ENCODE measurements at regions of chr12 and their contacts with region 1.

Region 1: DNA sequence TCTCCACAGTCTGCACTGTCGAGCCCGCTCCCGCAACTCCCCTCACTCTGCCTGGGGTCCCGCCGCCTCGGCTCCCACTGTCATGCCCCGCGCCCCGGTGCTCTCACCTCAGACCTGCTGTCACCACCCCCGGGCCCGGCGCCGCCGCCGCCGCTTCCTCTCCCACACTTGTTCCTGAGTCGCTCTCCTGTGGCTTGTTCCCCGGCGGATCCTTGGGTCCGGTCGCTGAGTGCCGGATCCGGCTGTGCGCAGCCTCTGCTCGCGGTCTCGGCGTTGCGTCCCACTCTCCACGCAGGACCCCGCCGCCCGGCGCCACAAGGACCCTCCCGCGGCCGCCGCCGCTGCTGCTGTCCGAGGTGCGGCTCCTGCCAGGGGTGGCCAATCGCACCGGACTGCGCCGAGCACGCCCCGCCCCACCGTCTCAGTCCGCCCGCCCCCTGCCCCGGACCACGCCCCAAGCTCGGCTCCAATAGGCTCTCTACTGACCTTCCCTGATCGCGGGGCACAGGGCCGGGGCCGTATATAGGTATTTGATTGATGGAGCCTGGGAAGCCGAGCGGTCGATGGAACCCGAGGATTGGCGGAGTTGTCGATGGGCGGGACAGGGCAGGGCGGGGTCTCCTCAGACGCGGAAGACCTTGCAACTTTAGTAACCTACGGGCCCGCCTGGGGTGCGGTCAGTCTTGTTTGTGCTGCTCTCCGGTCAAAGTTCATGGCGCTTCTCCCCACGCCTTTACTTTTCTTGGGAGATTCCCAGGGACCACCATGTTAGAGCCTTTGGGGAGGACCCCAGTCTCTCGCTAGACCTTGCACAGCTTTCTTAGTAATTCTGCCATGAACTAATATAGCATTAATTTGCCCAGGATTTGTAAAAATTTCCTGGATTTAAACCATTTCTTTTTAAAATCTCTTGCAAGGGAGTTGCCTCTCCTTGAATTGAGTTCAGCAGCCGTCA is at the start of gene TAOK3:
- DNase-seq: peak; percentile 94 to 99 (median 96)
- ATAC-seq: peak; percentile 84
- H3K4me3 ChIP-seq: peak within 1 kb of the TSS; percentile 86
- H3K4me3 Mint-ChIP-seq: peak within 1 kb of the TSS; percentile 100
- H3K27ac ChIP-seq: peak within 1 kb of the TSS; percentile 46 to 71
- H3K27ac Mint-ChIP-seq: peak within 1 kb of the TSS; percentile 100
- H3K4me1 ChIP-seq: peaks cover 49% of the 10 kb centered on the region
- H3K4me1 Mint-ChIP-seq: peaks cover 61% of the 10 kb centered on the region
- H3K27me3 ChIP-seq: no peaks in the 10 kb centered on the region
- H3K27me3 Mint-ChIP-seq: no peaks in the 10 kb centered on the region
- CTCF ChIP-seq: no peak
- total RNA-seq, gene TAOK3: 53.5 to 56.6 TPM

Region 2: DNA sequence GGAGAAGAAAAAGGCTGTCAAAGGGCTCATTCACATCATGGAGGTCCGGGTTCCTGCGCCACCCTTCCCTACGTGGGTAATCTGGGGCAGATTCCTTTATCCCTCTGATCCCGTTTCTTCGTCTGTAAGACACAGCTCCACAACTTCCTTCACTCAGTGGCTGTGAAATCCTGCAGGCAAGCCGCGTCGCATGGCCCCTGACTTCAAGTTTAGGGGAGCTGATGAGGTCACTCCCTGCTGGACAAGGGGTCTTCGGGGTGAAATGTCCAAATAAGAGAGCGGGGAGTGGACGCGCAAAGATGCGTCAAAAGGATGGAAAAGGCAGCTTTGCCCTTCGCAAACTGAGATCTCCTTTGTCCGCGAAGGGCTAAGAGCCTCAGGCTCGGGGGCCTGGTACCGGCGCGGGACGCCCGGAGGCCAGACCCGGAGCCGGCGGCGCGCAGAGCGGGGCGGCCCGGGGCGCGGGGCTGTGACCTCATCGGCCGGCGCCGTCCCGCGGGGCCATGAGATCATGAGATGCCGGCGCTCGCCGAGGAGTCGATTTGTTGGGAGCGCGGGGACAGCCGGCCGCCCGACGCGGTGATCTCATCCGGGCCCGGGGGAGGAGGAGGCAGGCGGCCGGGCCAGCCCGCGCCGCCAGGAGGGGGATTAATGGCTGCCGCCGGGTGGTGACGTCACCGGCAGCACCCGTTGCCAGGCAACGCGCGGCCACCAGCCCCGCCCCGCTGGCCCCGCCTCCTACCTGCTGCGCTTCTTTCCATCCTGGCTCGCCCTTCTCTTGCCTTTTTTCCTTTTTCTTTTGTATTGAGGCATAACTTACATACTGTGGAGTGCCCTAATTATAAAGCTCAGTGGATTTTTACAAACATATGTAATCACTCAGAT is 1553.6 kb before region 1 on chr12:
- CTCF ChIA-PET with region 1: no interaction called
- POLR2A ChIA-PET with region 1: no interaction called
- intact Hi-C with region 1: loop called in 1 of 2 experiments (anchors 10 kb)
- DNase-seq: peak; percentile 83 to 97 (median 88)
- ATAC-seq: peak; percentile 86
- H3K4me3 ChIP-seq: peak overlapping the region; percentile 71
- H3K4me3 Mint-ChIP-seq: peak overlapping the region; percentile 98
- H3K27ac ChIP-seq: peak overlapping the region; percentile 80 to 81
- H3K27ac Mint-ChIP-seq: peak overlapping the region; percentile 89
- H3K4me1 ChIP-seq: peaks cover 16% of the 10 kb centered on the region
- H3K4me1 Mint-ChIP-seq: peaks cover 21% of the 10 kb centered on the region
- H3K27me3 ChIP-seq: no peaks in the 10 kb centered on the region
- H3K27me3 Mint-ChIP-seq: no peaks in the 10 kb centered on the region
- CTCF ChIP-seq: no peak

Region 3: DNA sequence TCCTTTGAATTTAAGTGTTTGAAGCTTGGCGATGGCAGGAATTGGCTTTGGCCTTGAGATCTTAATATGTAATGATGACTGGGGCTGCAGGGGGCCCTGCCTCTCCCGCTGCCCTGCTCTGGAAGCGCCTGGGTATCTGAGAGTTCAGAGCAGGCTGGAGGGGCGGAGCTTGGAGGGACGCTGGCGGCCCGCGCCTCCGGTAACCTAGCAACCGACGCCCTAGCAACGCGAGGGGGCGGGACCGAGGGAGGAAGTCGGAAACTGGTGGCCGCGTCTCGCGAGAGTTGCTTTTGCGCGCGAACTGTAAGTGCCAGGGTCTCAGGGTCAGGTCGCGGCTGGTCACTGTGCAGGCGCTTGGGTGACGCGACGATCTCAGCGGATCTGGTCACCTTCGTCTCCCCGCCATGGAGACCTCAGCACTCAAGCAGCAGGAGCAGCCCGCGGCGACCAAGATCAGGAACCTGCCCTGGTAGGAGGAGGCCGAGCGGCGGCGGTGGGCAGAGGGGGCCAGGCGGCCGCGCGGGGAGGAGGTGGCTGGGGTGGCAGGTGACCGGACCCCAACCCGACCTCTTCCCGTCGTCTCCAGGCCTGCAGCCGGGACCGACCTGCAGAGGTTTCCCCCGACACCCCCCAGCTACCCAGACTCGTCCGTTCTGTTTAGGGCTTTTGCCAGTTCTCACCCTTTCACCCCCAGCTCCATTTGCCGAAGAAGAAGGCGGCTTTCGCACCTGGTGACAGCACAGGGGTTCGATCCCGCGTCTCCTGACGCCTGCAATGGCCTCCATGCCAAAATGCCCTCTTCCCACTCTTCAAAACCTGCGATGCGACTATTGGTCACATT is 356.2 kb before region 1 on chr12 and contains the start of gene RFC5:
- CTCF ChIA-PET with region 1: no interaction called
- POLR2A ChIA-PET with region 1: interaction called, 3 read pairs
- intact Hi-C with region 1: loop called in 1 of 2 experiments (anchors 2 kb)
- DNase-seq: peak; percentile 94 to 99 (median 97)
- ATAC-seq: peak; percentile 98
- H3K4me3 ChIP-seq: peak within 1 kb of the TSS; percentile 85
- H3K4me3 Mint-ChIP-seq: peak within 1 kb of the TSS; percentile 90
- H3K27ac ChIP-seq: peak within 1 kb of the TSS; percentile 11 to 16
- H3K27ac Mint-ChIP-seq: peak within 1 kb of the TSS; percentile 77
- H3K4me1 ChIP-seq: peaks cover 17% of the 10 kb centered on the region
- H3K4me1 Mint-ChIP-seq: peaks cover 21% of the 10 kb centered on the region
- H3K27me3 ChIP-seq: no peaks in the 10 kb centered on the region
- H3K27me3 Mint-ChIP-seq: no peaks in the 10 kb centered on the region
- CTCF ChIP-seq: no peak
- total RNA-seq, gene RFC5: 8.7 to 9.1 TPM

Region 4: GRCh38 chr12:118135788-118136558 is 236.8 kb before region 1 on chr12 and contains the start of gene PEBP1:
- CTCF ChIA-PET with region 1: interaction called, 14 read pairs
- POLR2A ChIA-PET with region 1: interaction called, 28 read pairs
- intact Hi-C with region 1: loop called (anchors 5 kb)
- DNase-seq: peak; percentile 85 to 95 (median 92)
- ATAC-seq: peak; percentile 99
- H3K4me3 ChIP-seq: peak within 1 kb of the TSS; percentile 91
- H3K4me3 Mint-ChIP-seq: peak within 1 kb of the TSS; percentile 98
- H3K27ac ChIP-seq: peak within 1 kb of the TSS; percentile 41 to 42
- H3K27ac Mint-ChIP-seq: peak within 1 kb of the TSS; percentile 92
- H3K4me1 ChIP-seq: peaks cover 33% of the 10 kb centered on the region
- H3K4me1 Mint-ChIP-seq: peaks cover 41% of the 10 kb centered on the region
- H3K27me3 ChIP-seq: no peaks in the 10 kb centered on the region
- H3K27me3 Mint-ChIP-seq: no peaks in the 10 kb centered on the region
- CTCF ChIP-seq: no peak
- total RNA-seq, gene PEBP1: 116 to 119 TPM

Region 5: DNA sequence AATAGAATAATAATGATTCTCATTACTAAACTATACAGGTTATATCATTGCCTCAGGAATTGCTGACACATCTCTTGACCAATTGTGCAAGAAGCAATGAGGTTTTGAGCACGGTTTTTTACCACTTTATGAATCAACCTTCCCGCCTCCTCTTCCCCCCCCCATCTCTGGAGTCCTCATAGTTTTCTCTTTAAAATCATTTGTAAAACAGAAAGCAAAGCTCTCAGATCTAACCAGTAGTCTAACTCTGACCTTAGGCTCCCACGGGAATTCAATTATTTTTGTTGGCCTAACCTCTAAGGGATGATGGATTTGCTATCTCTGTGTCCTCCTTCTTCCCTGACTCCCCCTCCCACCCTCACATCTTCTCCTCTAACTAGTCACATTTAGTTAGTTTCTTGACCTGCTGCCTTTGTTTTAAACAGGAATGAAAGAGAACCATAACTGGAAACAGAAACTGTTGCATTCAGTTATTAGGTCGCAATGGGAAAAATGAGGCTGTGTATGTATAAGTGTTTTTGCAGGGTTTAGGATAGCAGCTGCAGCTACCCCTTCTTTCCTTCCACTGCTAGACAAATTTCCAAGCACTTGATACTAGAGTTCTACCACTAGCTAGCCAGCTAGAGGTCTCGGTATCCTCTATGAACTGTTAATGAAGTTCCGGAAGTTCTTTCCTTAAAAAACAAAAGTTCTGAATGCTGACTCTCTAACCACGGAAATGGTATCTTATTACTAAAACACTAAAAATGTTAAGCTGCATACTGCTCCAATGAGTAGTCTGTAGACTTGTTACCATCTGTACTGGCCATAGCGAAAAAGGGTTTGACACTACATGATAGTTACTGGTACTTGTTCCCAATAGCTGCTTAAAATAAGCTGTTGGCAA is 65.5 kb before region 1 on chr12:
- CTCF ChIA-PET with region 1: interaction called, 5 read pairs
- POLR2A ChIA-PET with region 1: interaction called, 3 read pairs
- intact Hi-C with region 1: loop called in 1 of 2 experiments (anchors 10 kb)
- DNase-seq: peak in 4 of 14 experiments; percentile 13 to 48 (median 26)
- ATAC-seq: peak; percentile 17
- H3K4me3 ChIP-seq: no peak overlapping the region
- H3K4me3 Mint-ChIP-seq: peak overlapping the region; percentile 31
- H3K27ac ChIP-seq: no peak overlapping the region
- H3K27ac Mint-ChIP-seq: peak overlapping the region; percentile 21
- H3K4me1 ChIP-seq: peaks cover 9% of the 10 kb centered on the region
- H3K4me1 Mint-ChIP-seq: peaks cover 45% of the 10 kb centered on the region
- H3K27me3 ChIP-seq: no peaks in the 10 kb centered on the region
- H3K27me3 Mint-ChIP-seq: no peaks in the 10 kb centered on the region
- CTCF ChIP-seq: no peak